Dorsolateral prefrontal cortex (tissue), 120 donors: ENCODE measurements at regions of chr14 and their contacts with region 1.

Region 1: DNA sequence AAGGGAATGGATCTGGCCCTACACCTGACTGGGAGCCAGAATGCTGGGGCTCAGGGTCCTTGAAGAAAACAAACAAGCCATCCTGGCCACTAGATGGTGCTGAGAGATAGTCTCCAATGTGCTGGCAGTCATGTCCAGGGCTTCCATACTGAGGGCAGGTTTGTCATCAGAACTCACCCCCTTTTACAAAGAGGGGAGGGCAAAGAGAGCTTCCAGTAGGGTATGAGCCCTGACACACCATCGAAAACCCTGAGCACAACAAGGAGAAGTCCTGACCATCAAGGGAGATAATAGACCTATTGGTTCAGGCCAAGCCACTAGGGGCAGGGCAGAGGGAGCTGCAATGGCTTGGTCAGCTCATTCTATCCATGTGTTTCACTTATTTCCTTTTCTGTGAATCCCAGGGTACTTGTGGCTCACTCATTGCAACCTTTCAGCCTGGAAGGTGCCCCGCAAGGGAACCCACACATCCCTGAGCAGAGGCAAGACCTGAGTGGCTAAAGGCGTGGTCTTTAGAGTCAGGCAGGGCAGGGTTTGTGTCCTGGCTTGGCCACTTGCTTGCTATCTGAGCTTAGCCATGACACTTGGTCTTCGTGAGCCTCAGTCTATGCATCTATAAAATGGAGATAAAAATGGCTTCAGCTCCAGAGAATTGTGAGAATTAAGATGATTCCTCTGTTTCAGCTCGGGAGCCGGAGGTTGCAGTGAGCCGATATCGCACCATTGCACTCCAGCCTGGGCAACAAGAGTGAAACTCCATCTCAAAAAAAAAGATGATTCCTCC is 6.2 kb upstream of the PLEKHH1 start:
- DNase-seq: peak in 7 of 10 donors; percentile 44 to 73 (median 56)
- H3K4me3 ChIP-seq: no peak overlapping the region
- H3K27ac ChIP-seq: peak overlapping the region in 55 of 59 donors; percentile 6 to 100 (median 77)
- H3K27me3 ChIP-seq: no peaks in the 10 kb centered on the region
- CTCF ChIP-seq: peak; percentile 55 to 96 (median 83)

Region 2: DNA sequence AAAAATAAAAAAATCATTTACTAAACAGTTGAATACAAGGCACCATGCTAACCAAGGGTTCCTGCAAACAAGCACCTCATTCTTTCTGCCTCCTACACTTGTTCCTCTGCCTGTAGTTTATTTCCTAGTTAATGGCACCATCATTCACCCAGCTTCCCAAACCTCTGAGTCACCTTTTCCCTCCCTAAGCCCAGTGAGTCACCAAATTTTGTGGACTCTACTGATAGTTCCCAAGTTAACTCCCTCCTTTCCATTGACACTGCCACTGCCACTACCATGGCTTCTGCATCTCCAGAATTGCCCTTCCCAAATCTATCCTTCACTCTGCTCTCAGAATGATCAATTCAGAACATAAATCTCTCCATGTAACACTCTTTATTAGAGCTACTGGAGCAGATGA is 339.7 kb before region 1 on chr14:
- intact Hi-C with region 1: no loop called
- DNase-seq: no peak
- H3K4me3 ChIP-seq: no peak overlapping the region
- H3K27ac ChIP-seq: no peak overlapping the region
- H3K27me3 ChIP-seq: no peaks in the 10 kb centered on the region
- CTCF ChIP-seq: no peak

Region 3: GRCh38 chr14:67331368-67332125 is 195.3 kb before region 1 on chr14:
- intact Hi-C with region 1: no loop called
- DNase-seq: no peak
- H3K4me3 ChIP-seq: no peak overlapping the region
- H3K27ac ChIP-seq: peak overlapping the region in 11 of 59 donors; percentile 1 to 59 (median 17)
- H3K27me3 ChIP-seq: no peaks in the 10 kb centered on the region
- CTCF ChIP-seq: no peak

Region 4: GRCh38 chr14:67571272-67571850 is 44.5 kb after region 1 on chr14:
- intact Hi-C with region 1: loop called (anchors 1 to 2 kb)
- DNase-seq: peak in 9 of 10 donors; percentile 63 to 79 (median 75)
- H3K4me3 ChIP-seq: no peak overlapping the region
- H3K27ac ChIP-seq: peak overlapping the region in 48 of 59 donors; percentile 2 to 90 (median 74)
- H3K27me3 ChIP-seq: no peaks in the 10 kb centered on the region
- CTCF ChIP-seq: peak; percentile 53 to 91 (median 84)

Region 5: GRCh38 chr14:67582061-67582460 is 55.2 kb after region 1 on chr14:
- intact Hi-C with region 1: no loop called
- DNase-seq: peak in 1 of 10 donors; percentile 34
- H3K4me3 ChIP-seq: no peak overlapping the region
- H3K27ac ChIP-seq: peak overlapping the region in 13 of 59 donors; percentile 0 to 76 (median 43)
- H3K27me3 ChIP-seq: no peaks in the 10 kb centered on the region
- CTCF ChIP-seq: no peak

Region 6: DNA sequence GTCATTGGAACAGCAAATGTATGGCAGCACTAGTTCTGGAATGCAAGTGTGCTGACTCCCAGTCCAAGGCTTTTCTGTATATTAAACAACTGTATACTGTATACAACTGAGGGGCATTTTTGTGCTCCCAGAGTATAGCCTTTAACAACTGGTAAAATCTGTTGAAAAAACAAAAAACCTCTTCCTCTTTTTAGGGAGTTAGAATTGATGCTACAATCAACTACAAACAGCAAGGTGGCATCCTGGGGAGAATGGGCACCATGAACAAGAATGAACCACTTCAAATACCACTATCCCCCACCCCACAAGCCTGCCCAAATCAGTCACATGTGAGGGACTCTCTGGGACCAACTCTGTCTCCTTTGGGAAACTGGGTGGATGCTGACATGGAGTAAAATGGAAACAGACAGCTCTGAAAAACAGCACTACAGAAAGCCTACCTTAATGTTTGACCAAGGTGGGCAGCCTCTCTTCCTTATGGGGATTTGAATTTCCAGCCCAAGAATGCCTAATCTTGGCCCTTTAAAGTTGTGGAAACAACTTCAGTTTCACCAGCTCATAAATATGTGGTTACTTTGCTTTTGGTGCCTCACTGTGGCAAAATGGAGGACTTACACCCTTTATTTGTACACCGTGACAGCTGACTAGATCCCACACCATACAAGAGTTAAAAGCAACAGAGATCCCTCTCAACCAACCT is 140.0 kb after region 1 on chr14:
- intact Hi-C with region 1: loop called in 1 of 2 experiments (anchors 5 kb)
- DNase-seq: peak in 2 of 10 donors; percentile 28 to 29
- H3K4me3 ChIP-seq: no peak overlapping the region
- H3K27ac ChIP-seq: peak overlapping the region in 2 of 59 donors; percentile 11 to 30
- H3K27me3 ChIP-seq: no peaks in the 10 kb centered on the region
- CTCF ChIP-seq: peak in 55 of 56 donors; percentile 50 to 83 (median 67)

Region 7: DNA sequence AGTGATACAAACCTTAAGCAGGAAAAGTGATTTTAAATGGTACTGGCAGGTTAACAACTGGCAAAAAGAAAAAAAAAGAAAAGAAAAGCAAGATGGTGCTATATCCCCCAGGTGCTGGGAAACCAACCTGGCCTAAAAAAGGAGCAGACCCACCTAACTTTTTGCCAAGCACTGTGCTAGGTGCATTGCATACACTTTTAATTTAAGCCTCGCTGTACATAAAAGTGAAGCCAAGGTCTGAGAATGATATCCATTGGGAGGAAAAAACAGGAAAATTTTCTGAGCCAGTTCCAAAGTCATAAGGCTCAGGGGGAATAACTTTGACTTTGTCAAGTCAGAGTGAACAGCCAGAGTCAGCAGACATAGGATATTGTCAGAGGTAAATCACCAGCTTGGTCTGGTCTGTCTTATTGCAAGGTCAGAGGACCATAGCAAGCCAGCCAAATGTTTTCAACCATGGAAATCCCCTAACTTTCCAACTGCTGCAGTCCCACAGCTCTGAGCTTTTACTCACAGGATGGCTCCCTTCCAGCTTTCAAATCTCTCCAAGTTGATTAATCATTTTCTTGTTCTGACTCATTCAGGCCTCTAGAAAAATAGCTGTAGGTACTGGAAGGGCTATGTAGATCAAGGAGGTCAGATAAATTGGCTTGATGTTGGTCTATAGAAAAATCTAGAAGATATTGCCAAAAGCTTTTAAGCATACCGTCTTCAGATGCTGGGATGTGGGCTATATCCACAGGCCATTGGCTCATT is 705.6 kb after region 1 on chr14:
- intact Hi-C with region 1: no loop called
- DNase-seq: no peak
- H3K4me3 ChIP-seq: no peak overlapping the region
- H3K27ac ChIP-seq: peak overlapping the region in 23 of 59 donors; percentile 1 to 76 (median 33)
- H3K27me3 ChIP-seq: no peaks in the 10 kb centered on the region
- CTCF ChIP-seq: no peak